Activated B cell treated with CpG ODN at 0.5 μM for 24 hours (primary cell): ENCODE measurements at regions of chr17 and their contacts with region 1.

Region 1: DNA sequence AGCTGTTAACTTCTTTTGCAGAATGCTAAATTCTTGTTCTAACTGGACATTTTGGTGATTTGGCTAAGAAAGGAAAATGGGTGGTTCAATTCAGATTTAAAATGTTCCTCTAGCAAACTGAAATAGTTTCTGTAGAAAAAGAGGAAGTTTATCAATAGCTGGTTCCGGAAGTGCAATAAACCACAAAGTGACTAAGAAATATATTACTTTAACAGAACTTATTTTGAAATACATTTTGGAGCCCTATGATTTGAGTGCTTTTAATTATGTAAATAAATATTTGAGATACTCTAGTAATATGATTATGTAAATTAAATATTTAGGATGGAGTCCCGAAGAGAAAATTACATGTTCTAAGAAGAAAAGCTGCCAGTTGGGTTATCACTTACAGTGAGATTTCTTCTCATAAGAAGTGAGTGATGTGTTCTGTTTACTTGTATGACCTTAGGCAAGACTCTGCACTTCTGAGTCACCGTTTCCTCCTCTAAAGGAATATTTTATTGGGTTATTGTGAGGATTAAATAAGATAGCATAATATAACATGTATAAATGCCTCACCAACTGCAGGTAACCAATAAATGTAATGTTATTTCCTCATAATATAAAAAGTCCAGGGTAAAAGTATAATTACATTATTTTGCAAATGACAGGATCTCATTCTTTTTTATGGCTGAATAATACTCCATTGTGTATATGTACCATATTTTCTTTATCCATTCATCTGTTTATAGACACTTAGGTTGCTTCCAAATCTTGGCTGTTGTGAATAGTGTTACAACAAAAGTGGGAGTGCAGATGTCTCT is at the start of gene EVI2B:
- DNase-seq: no peak
- ATAC-seq: peak; percentile 25
- H3K4me3 Mint-ChIP-seq: peak within 1 kb of the TSS; percentile 93
- H3K27ac Mint-ChIP-seq: peak within 1 kb of the TSS; percentile 94
- H3K4me1 Mint-ChIP-seq: peaks cover 63% of the 10 kb centered on the region
- H3K27me3 Mint-ChIP-seq: no peaks in the 10 kb centered on the region
- CTCF ChIP-seq: no peak
- total RNA-seq, gene EVI2B: 104 and 111 TPM in 2 replicates

Region 2: GRCh38 chr17:31294820-31295488 is 19.2 kb before region 1 on chr17:
- CTCF ChIA-PET with region 1: no interaction called
- POLR2A ChIA-PET with region 1: no interaction called
- intact Hi-C with region 1: no loop called
- DNase-seq: no peak
- ATAC-seq: no peak
- H3K4me3 Mint-ChIP-seq: no peak overlapping the region
- H3K27ac Mint-ChIP-seq: no peak overlapping the region
- H3K4me1 Mint-ChIP-seq: peaks cover 2% of the 10 kb centered on the region
- H3K27me3 Mint-ChIP-seq: no peaks in the 10 kb centered on the region
- CTCF ChIP-seq: no peak

Region 3: DNA sequence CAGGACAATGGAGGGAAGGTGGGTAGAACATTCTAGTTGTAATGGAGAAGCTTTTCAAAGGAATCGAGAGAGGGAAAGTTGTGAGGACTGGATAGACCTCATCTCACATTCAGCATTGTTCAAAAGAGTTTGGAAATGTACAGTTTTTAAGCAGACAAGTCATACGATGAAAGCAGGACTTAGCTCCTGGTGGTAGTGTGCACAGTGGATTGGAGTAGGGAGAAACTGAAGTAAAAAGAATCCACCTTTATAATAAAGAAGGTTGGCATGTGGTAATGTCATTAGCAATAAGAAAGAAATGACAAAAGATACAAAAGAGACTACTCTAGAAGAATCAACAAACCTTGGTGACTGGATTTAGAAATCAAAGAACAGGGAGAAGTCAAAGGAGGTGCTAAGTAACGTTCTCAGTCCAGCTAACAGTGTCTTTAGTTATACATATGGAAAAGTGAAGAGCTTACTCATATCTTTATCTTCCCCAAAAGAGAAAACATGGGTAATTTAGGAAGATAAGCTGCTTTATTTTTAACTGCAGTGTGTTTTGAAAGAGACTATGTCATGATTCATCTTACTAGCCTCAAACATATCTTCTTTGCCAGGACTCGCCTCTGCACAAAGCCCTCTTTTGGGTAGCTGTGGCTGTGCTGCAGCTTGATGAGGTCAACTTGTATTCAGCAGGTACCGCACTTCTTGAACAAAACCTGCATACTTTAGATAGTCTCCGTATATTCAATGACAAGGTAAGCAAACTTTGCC is 25.9 kb after region 1 on chr17:
- CTCF ChIA-PET with region 1: no interaction called
- POLR2A ChIA-PET with region 1: no interaction called
- intact Hi-C with region 1: loop called (anchors 5 kb)
- DNase-seq: no peak
- ATAC-seq: no peak
- H3K4me3 Mint-ChIP-seq: no peak overlapping the region
- H3K27ac Mint-ChIP-seq: no peak overlapping the region
- H3K4me1 Mint-ChIP-seq: no peaks in the 10 kb centered on the region
- H3K27me3 Mint-ChIP-seq: no peaks in the 10 kb centered on the region
- CTCF ChIP-seq: no peak